Left colon (tissue), 2 donors: ENCODE measurements at regions of chr15 and their contacts with region 1.

Region 1: DNA sequence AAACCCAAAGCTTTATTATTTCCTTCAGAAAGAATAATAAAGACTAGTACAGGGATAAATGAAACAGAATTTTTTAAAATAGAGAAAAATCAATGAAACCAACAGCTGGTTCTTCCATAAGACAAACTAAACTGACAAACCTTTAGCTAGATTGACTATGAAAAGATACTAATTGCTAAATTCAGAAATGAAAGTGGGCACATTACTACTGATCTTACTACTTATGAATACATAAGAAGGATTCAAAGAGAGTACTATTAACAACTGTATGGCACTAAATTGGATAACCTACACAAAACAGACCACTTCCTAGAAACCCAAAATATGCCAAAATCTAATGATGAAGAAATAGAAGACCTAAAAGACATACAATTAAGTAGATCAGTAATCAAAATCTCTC is 278.2 kb downstream of the ISL2 start:
- DNase-seq: no peak
- ATAC-seq: no peak

Region 2: DNA sequence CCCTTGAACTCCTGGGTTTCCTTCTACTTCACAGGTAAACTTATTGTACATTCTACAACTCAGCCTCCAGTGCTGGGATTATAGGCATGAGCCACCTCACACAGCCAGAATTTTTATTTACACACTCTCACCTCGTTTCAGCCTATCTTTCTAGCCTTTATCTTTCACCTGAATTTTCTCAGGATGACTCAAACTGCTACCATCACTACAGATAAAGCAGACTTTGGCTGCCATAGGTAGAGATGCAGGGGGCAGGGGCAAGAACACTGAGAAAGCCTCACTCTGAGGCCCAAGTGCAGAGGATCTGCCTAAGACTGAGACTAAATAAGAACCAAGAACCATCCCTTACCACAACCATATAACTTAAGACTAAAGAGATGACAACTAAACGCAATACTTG is 362.5 kb before region 1 on chr15:
- intact Hi-C with region 1: no loop called
- DNase-seq: no peak
- ATAC-seq: no peak

Region 3: GRCh38 chr15:76667943-76668715 is 53.4 kb after region 1 on chr15:
- intact Hi-C with region 1: loop called in 1 of 2 experiments (anchors 10 kb)
- DNase-seq: no peak
- ATAC-seq: no peak